Activated CD4-positive, alpha-beta T cell treated with anti-CD3 and anti-CD28 coated beads for 36 hours (primary cell): ENCODE measurements at regions of chr14 and their contacts with region 1.

Region 1: DNA sequence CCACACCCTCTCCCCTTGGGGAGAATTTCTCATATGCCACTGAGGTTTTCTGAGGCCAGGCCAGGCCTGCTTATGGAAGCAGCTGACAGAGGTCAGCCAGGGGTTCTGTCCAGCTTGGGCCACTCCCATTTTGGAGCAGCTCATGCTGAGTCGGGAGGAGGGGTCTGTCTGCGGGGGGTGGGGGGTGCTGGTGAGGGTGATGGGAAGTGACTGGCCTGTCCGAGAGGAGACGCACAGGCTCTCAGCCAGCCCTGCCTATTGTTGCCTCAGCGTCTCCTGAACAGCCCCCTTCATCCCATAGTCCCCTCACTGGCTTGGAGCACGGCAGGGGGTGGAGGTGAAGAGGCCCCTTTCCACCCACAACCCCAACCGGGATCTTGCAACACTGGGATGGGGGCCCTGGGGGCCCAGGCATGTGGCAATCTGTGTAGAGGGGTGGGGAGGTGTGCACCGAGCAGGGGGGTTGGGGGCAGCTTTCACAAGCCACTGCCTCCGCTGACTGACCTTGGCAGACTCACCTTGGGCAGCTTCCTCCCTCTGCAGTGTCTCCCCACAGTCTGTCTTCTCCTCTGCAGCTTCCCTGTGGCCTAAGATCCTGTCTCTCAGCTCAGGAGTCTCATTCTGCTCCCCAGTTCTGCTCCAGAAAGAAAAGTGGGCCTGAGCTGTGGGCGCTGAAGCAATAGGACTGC is 5.5 kb downstream of the CEBPE start:
- DNase-seq: no peak
- ATAC-seq: no peak
- H3K4me3 Mint-ChIP-seq: no peak overlapping the region
- H3K27ac Mint-ChIP-seq: no peak overlapping the region
- H3K4me1 Mint-ChIP-seq: peaks cover 27% of the 10 kb centered on the region
- H3K27me3 Mint-ChIP-seq: no peaks in the 10 kb centered on the region

Region 2: DNA sequence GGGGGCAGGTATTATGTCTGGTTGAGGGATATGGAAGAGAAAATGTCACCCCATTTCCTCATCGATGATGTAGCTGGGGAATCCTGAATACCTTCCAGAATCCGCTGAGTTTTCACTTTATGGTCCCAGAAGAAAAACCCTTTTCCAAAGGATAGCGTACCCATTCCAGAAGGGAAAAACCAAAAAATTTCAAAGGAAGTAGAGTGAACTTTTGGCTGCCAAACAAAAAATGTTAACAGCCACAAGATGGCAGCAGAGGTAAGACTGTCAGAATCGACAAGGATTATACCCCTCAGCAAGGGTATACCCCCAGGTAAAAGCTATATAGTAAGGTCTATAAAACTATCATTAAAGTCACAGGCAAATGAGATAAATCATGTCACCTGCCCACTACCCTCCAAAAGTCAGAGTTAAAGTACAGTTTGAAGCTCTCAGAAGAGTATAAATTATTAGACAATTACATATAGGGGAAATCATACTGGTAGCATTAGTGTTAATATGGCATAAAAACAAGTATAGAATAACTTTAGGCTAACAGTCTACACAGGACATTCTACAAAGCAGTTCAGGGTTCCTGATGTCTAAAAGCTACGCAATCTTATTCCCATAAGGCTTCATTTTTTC is 36.7 kb before region 1 on chr14:
- CTCF ChIA-PET with region 1: interaction called, 35 read pairs
- POLR2A ChIA-PET with region 1: no interaction called
- intact Hi-C with region 1: loop called in 1 of 2 experiments (anchors 1 kb)
- DNase-seq: peak; percentile 46
- ATAC-seq: peak; percentile 59
- H3K4me3 Mint-ChIP-seq: no peak overlapping the region
- H3K27ac Mint-ChIP-seq: peak overlapping the region; percentile 17
- H3K4me1 Mint-ChIP-seq: peaks cover 5% of the 10 kb centered on the region
- H3K27me3 Mint-ChIP-seq: no peaks in the 10 kb centered on the region